CD4-positive, alpha-beta memory T cell (primary cell): ENCODE measurements at regions of chr11 and their contacts with region 1.

Region 1: GRCh38 chr11:112280268-112281126 is 19.8 kb upstream of the PLET1 start:
- DNase-seq: peak; percentile 73 to 81 (median 76)
- H3K4me3 ChIP-seq: peak overlapping the region; percentile 67 to 83
- H3K4me3 Mint-ChIP-seq: peak overlapping the region; percentile 92 to 96 (median 94)
- H3K27ac ChIP-seq: peak overlapping the region; percentile 38
- H3K27ac Mint-ChIP-seq: peak overlapping the region; percentile 65 to 91 (median 85)
- H3K4me1 ChIP-seq: peaks cover 23% of the 10 kb centered on the region
- H3K4me1 Mint-ChIP-seq: peaks cover 18 to 25% (median 22%) of the 10 kb centered on the region in 4 donors
- H3K27me3 ChIP-seq: no peaks in the 10 kb centered on the region
- H3K27me3 Mint-ChIP-seq: no peaks in the 10 kb centered on the region

Region 2: GRCh38 chr11:111674941-111675340 is 605.6 kb before region 1 on chr11:
- CTCF ChIA-PET with region 1: no interaction called
- POLR2A ChIA-PET with region 1: no interaction called
- intact Hi-C with region 1: no loop called
- DNase-seq: no peak
- H3K4me3 ChIP-seq: no peak overlapping the region
- H3K4me3 Mint-ChIP-seq: no peak overlapping the region
- H3K27ac ChIP-seq: no peak overlapping the region
- H3K27ac Mint-ChIP-seq: peak overlapping the region in 1 of 7 donors; percentile 13
- H3K4me1 ChIP-seq: no peaks in the 10 kb centered on the region
- H3K4me1 Mint-ChIP-seq: peaks cover 0 to 4% (median 2%) of the 10 kb centered on the region in 4 donors
- H3K27me3 ChIP-seq: no peaks in the 10 kb centered on the region
- H3K27me3 Mint-ChIP-seq: no peaks in the 10 kb centered on the region

Region 3: DNA sequence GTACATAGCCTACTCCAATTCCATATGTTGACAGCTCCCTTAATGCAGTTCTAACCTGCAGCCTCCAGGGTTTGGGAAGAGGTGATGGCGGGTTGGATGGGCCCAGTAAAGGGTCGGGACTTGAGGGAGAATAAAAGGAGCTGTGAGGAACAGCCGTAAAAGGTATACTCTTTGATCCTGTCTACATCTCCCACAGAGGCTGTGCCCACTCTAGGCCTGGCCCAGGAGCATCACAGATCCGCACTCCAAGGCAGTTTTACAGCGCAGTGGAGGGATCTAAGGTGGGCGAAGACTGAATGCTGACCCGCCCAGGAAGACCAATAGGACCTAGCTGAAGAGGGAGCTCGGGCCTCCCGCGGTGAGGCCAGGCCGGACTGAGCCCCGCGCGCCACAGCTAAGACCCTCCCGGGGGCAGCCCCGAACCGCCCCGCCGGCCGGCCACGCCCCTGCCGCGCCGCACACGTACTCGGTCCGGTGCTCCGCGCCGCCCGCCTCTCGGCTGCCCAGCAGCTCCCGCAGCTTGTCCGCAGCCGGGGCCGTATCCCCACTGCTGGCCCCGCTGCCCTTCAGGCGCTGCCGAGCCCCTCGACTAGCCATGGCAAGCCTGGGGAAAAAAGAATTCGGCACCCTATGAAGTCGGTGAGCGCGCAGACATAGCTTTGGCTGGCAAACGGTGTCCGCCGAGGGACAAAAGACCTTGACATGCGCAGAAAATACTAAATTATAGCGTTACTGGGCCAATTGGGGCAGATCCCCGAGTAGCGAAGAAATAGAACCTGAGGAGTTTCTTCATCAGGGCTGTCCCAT is 409.4 kb before region 1 on chr11 and contains the start of gene ALG9:
- CTCF ChIA-PET with region 1: no interaction called
- POLR2A ChIA-PET with region 1: no interaction called
- intact Hi-C with region 1: loop called (anchors 1 kb)
- DNase-seq: peak; percentile 88 to 92 (median 88)
- H3K4me3 ChIP-seq: peak within 1 kb of the TSS; percentile 79
- H3K4me3 Mint-ChIP-seq: peak within 1 kb of the TSS; percentile 91 to 96 (median 94)
- H3K27ac ChIP-seq: peak within 1 kb of the TSS; percentile 91
- H3K27ac Mint-ChIP-seq: peak within 1 kb of the TSS; percentile 94 to 98 (median 96)
- H3K4me1 ChIP-seq: peaks cover 22% of the 10 kb centered on the region
- H3K4me1 Mint-ChIP-seq: peaks cover 10 to 37% (median 26%) of the 10 kb centered on the region in 4 donors
- H3K27me3 ChIP-seq: no peaks in the 10 kb centered on the region
- H3K27me3 Mint-ChIP-seq: no peaks in the 10 kb centered on the region
- total RNA-seq, gene ALG9: 28.2 to 28.3 TPM

Region 4: GRCh38 chr11:111932611-111932950 is 347.9 kb before region 1 on chr11:
- CTCF ChIA-PET with region 1: interaction called, 6 read pairs
- POLR2A ChIA-PET with region 1: no interaction called
- intact Hi-C with region 1: loop called (anchors 1 kb)
- DNase-seq: no peak
- H3K4me3 ChIP-seq: no peak overlapping the region
- H3K4me3 Mint-ChIP-seq: peak overlapping the region in 5 of 8 donors; percentile 1 to 46 (median 32)
- H3K27ac ChIP-seq: no peak overlapping the region
- H3K27ac Mint-ChIP-seq: peak overlapping the region in 1 of 7 donors; percentile 38
- H3K4me1 ChIP-seq: peaks cover 25% of the 10 kb centered on the region
- H3K4me1 Mint-ChIP-seq: peaks cover 10 to 26% (median 14%) of the 10 kb centered on the region in 4 donors
- H3K27me3 ChIP-seq: no peaks in the 10 kb centered on the region
- H3K27me3 Mint-ChIP-seq: peaks cover 3 to 4% of the 10 kb centered on the region in 2 donors

Region 5: GRCh38 chr11:112113539-112114457 is 166.7 kb before region 1 on chr11:
- CTCF ChIA-PET with region 1: interaction called, 33 read pairs
- POLR2A ChIA-PET with region 1: no interaction called
- intact Hi-C with region 1: loop called (anchors 1 kb)
- DNase-seq: peak in 4 of 5 donors; percentile 33 to 56 (median 46)
- H3K4me3 ChIP-seq: no peak overlapping the region
- H3K4me3 Mint-ChIP-seq: no peak overlapping the region
- H3K27ac ChIP-seq: no peak overlapping the region
- H3K27ac Mint-ChIP-seq: peak overlapping the region in 2 of 7 donors; percentile 17 to 57
- H3K4me1 ChIP-seq: no peaks in the 10 kb centered on the region
- H3K4me1 Mint-ChIP-seq: peaks cover 0 to 2% (median 0%) of the 10 kb centered on the region in 4 donors
- H3K27me3 ChIP-seq: no peaks in the 10 kb centered on the region
- H3K27me3 Mint-ChIP-seq: no peaks in the 10 kb centered on the region

Region 6: GRCh38 chr11:112226062-112226830 is 54.3 kb before region 1 on chr11 and contains the start of gene PTS:
- CTCF ChIA-PET with region 1: interaction called, 452 read pairs
- POLR2A ChIA-PET with region 1: interaction called, 16 read pairs
- intact Hi-C with region 1: no loop called
- DNase-seq: peak; percentile 81 to 91 (median 88)
- H3K4me3 ChIP-seq: peak within 1 kb of the TSS; percentile 98 to 100
- H3K4me3 Mint-ChIP-seq: peak within 1 kb of the TSS; percentile 92 to 96 (median 94)
- H3K27ac ChIP-seq: peak within 1 kb of the TSS; percentile 98
- H3K27ac Mint-ChIP-seq: peak within 1 kb of the TSS; percentile 96 to 99 (median 99)
- H3K4me1 ChIP-seq: peaks cover 15% of the 10 kb centered on the region
- H3K4me1 Mint-ChIP-seq: peaks cover 19 to 32% (median 22%) of the 10 kb centered on the region in 4 donors
- H3K27me3 ChIP-seq: no peaks in the 10 kb centered on the region
- H3K27me3 Mint-ChIP-seq: no peaks in the 10 kb centered on the region
- total RNA-seq, gene PTS: 23.6 to 26.9 TPM

Region 7: DNA sequence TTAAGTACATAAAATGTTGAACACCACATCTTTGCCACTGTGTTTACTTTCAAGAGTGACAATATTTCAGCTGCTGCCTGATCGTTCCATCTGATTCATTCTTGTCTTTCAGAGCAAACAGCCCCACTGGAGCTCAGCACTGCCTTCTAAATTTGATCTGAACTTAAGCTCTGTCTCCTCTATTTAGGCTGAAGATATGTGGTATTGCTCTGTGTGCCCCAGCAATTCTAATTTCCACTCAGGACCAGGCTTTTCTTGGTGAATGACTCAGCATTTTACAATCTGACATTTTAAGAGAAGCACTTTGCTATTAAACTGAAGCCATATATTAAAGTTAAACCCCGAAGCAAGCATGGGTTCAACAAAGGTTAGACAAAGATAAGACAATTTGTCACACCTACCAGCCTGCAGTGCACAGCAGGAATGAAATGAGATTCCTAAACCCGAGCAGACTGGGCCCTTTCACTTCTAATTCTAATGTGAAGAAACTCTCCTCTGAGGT is 21.8 kb after region 1 on chr11:
- CTCF ChIA-PET with region 1: interaction called, 16 read pairs
- POLR2A ChIA-PET with region 1: no interaction called
- intact Hi-C with region 1: no loop called
- DNase-seq: no peak
- H3K4me3 ChIP-seq: no peak overlapping the region
- H3K4me3 Mint-ChIP-seq: no peak overlapping the region
- H3K27ac ChIP-seq: no peak overlapping the region
- H3K27ac Mint-ChIP-seq: no peak overlapping the region
- H3K4me1 ChIP-seq: peaks cover 19% of the 10 kb centered on the region
- H3K4me1 Mint-ChIP-seq: peaks cover 15 to 24% (median 21%) of the 10 kb centered on the region in 4 donors
- H3K27me3 ChIP-seq: no peaks in the 10 kb centered on the region
- H3K27me3 Mint-ChIP-seq: no peaks in the 10 kb centered on the region

Region 8: DNA sequence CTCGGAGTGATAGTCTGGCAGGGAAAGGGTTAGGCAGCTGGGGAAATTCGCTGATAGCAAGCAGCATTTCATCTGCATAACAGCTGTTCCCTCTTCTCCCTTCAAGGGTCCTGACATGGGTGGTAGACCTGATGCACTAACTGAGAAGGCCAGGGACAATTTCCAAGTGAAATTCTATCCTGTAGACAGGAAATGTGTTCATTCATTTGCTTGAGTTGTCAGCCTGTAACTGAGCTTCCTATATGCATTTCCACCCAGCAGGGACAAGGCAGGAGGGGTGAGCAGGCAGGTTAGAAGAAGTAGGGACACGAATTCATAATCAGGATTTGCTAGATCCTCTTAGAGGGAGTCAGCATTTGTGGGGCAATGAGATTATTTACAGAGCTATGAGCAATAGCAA is 526.4 kb after region 1 on chr11:
- CTCF ChIA-PET with region 1: no interaction called
- POLR2A ChIA-PET with region 1: no interaction called
- intact Hi-C with region 1: no loop called
- DNase-seq: no peak
- H3K4me3 ChIP-seq: no peak overlapping the region
- H3K4me3 Mint-ChIP-seq: no peak overlapping the region
- H3K27ac ChIP-seq: no peak overlapping the region
- H3K27ac Mint-ChIP-seq: no peak overlapping the region
- H3K4me1 ChIP-seq: no peaks in the 10 kb centered on the region
- H3K4me1 Mint-ChIP-seq: no peaks in the 10 kb centered on the region
- H3K27me3 ChIP-seq: no peaks in the 10 kb centered on the region
- H3K27me3 Mint-ChIP-seq: peaks cover 0 to 3% of the 10 kb centered on the region in 2 donors

Region 9: GRCh38 chr11:113289431-113290187 is 1009.1 kb after region 1 on chr11:
- CTCF ChIA-PET with region 1: interaction called, 23 read pairs
- POLR2A ChIA-PET with region 1: no interaction called
- intact Hi-C with region 1: no loop called
- DNase-seq: peak; percentile 59 to 65 (median 62)
- H3K4me3 ChIP-seq: no peak overlapping the region
- H3K4me3 Mint-ChIP-seq: no peak overlapping the region
- H3K27ac ChIP-seq: no peak overlapping the region
- H3K27ac Mint-ChIP-seq: no peak overlapping the region
- H3K4me1 ChIP-seq: no peaks in the 10 kb centered on the region
- H3K4me1 Mint-ChIP-seq: no peaks in the 10 kb centered on the region
- H3K27me3 ChIP-seq: no peaks in the 10 kb centered on the region
- H3K27me3 Mint-ChIP-seq: peaks cover 4% of the 10 kb centered on the region in 2 donors